Mammary epithelial cell (primary cell): ENCODE measurements at regions of chr11 and their contacts with region 1.

Region 1: GRCh38 chr11:36564376-36565030 is 3.3 kb upstream of the RAG1 start:
- DNase-seq: peak; percentile 38
- H3K4me3 ChIP-seq: peak overlapping the region; percentile 27 to 35 (median 28)
- H3K27ac ChIP-seq: no peak overlapping the region
- H3K4me1 ChIP-seq: no peaks in the 10 kb centered on the region
- H3K27me3 ChIP-seq: no peaks in the 10 kb centered on the region
- CTCF ChIP-seq: peak; percentile 64 to 72

Region 2: DNA sequence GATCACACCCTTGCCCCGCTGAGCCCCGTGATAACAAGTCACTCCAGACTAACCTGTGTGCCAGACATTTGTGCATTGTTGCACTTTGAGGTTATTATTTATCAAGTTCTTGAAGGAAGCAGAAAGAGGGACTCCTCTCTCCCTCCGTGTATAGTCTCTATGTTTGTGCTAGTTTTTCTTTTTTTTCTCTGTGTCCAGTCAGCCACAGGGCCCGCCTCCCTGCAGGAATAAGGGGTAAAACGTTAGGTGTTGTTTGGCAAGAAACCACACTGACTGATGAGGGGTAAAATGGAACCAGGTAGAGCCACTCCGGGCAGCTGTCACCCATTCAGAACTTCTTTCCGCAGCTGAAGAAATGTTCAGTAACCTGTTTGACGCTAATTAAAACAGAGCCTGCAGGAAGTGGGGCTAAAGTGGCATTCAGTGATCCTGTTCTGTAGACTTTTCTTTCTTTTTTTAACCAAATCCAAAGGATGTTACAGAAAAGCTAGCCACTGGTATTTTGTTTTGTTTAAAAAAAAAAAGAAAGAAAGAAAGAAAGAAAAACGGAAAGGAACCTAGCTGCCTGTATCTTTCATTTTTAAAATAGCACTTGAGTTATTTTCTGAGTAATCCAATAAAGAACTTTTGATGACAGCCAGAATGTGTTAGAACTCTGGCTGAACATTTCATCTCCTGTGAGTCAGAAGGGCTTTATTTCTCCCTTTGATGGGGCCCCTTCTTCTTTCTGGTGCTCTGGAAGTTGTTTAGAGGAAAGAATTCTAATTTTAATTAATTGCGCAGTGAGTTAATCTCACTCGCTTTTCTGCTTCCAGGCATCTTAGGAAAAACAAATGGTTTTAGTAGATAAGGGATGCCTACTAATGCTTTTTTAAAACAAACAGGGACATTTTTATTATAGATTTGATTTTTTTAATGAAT is 333.5 kb before region 1 on chr11:
- CTCF ChIA-PET with region 1: no interaction called
- dilution Hi-C with region 1: no loop called
- in situ Hi-C with region 1: no loop called
- intact Hi-C with region 1: no loop called
- DNase-seq: no peak
- H3K4me3 ChIP-seq: no peak overlapping the region
- H3K27ac ChIP-seq: no peak overlapping the region
- H3K4me1 ChIP-seq: peaks cover 3% of the 10 kb centered on the region
- H3K27me3 ChIP-seq: no peaks in the 10 kb centered on the region
- CTCF ChIP-seq: no peak

Region 3: GRCh38 chr11:36622431-36623136 is 58.1 kb after region 1 on chr11:
- CTCF ChIA-PET with region 1: no interaction called
- dilution Hi-C with region 1: no loop called
- in situ Hi-C with region 1: no loop called
- intact Hi-C with region 1: loop called (anchors 1 kb)
- DNase-seq: peak; percentile 25
- H3K4me3 ChIP-seq: no peak overlapping the region
- H3K27ac ChIP-seq: no peak overlapping the region
- H3K4me1 ChIP-seq: no peaks in the 10 kb centered on the region
- H3K27me3 ChIP-seq: no peaks in the 10 kb centered on the region
- CTCF ChIP-seq: peak; percentile 59 to 65

Region 4: DNA sequence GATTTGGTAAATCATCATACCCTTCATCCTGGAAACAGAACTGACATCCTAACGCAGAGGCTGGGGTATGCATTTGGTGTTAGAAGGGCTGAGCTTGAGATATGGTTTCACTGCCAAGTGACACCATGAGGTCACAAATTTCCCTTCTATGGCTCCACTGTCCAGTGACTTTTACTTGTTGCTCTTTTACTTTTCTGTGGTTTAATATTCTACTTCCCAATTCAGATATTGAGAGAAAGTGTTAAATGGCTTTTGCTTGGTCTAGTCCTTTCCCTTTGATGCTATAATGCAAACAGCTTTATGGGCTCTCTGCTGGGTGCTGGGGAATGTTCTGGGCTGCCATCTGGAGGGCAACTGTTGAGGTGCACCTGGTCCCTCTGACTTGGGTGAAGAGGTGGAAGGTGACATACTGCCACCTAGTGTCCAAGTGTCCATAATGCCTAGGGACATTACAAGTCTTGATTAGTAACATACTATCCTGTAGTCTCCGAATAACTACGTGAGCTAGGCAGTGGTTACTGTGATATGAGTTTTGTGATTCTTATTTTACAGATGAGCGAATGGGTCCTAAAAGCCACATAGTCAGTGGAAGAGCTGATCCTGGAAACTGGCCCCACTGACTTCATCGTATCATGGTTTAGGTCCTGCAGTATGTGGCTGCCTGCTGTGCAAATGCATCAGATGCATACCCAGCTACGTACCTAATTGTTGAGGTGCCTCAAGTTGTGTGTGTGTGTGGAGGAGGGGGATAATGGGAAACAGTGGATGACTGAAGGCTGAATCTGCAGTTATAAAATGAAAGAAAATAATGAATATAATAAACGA is 182.6 kb after region 1 on chr11:
- CTCF ChIA-PET with region 1: interaction called, 5 read pairs
- dilution Hi-C with region 1: no loop called
- in situ Hi-C with region 1: loop called (anchors 10 to 25 kb)
- intact Hi-C with region 1: loop called (anchors 1 kb)
- DNase-seq: peak; percentile 78
- H3K4me3 ChIP-seq: no peak overlapping the region
- H3K27ac ChIP-seq: no peak overlapping the region
- H3K4me1 ChIP-seq: no peaks in the 10 kb centered on the region
- H3K27me3 ChIP-seq: no peaks in the 10 kb centered on the region
- CTCF ChIP-seq: peak; percentile 100

Region 5: GRCh38 chr11:36840378-36840777 is 275.9 kb after region 1 on chr11:
- CTCF ChIA-PET with region 1: no interaction called
- dilution Hi-C with region 1: no loop called
- in situ Hi-C with region 1: no loop called
- intact Hi-C with region 1: no loop called
- DNase-seq: no peak
- H3K4me3 ChIP-seq: no peak overlapping the region
- H3K27ac ChIP-seq: no peak overlapping the region
- H3K4me1 ChIP-seq: no peaks in the 10 kb centered on the region
- H3K27me3 ChIP-seq: peaks cover 2% of the 10 kb centered on the region
- CTCF ChIP-seq: no peak